AG04449 (cell line): ENCODE measurements at regions of chr12 and their contacts with region 1.

Region 1: DNA sequence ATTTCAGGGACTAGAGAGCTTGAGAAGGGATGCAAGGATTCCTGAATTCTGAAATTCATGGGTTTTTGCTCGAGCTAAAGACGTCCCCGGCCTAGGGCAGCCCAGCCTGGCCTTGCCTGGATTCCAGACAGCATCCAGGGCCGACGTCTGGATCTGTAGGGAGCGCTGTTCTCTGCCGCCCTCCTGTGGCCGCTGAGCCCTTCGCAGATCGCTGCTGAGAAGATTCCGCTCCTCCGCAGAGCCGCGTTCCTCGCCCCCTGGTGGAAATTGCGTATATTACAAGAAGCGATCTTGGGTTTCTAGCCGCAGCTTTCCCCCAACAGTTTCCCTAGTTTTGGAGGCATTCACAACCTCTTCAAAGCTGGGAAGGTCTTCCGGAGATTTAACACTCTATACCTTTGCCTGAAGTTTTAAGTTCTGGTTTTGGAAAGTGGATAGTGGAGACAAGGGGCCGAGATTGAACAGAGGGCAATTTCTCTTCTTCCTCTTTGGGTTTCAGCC is 5.1 kb downstream of the CISTR start:
- DNase-seq: no peak
- H3K4me3 ChIP-seq: no peak overlapping the region
- CTCF ChIP-seq: peak; percentile 100

Region 2: GRCh38 chr12:53675651-53676453 is 70.8 kb before region 1 on chr12 and contains the start of gene ATP5MC2:
- CTCF ChIA-PET with region 1: interaction called, 74 read pairs
- POLR2A ChIA-PET with region 1: no interaction called
- DNase-seq: peak; percentile 88
- H3K4me3 ChIP-seq: peak within 1 kb of the TSS; percentile 90
- CTCF ChIP-seq: peak; percentile 100

Region 3: DNA sequence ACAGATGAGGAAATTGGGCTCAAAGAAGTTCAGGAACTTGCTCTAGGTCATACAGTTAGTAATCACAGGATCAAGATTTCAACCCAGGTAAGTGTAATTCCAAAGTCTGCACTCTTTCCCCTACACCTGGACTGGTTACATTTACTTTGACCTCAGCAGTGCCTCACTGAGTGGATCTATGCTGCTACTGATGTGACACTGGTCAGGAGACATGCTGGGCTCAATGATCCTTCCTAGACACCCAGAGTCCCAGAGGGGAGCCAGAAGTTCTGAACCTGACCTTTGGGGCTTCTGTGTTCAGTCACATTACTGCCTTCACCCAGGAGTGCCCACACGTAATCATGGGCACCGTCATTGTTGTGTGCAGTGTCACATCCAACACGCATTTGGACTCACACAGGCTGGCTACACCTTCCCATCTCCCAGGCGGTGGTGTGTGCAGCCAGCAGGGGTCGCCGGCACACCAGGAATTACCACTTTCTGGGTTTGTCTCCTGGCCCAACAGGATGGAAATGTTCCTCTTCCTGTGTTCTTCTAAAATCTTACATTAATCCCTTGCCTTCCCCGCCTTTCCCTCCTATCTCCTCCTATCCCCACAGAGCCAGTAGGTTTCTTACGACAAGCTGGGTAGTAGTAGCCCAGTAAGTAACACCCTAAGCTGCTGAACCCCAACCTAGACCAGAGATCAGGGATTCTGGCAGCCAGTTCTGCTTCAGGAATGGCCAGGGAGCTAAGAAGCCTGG is 45.0 kb before region 1 on chr12:
- CTCF ChIA-PET with region 1: interaction called, 941 read pairs
- POLR2A ChIA-PET with region 1: interaction called, 3 read pairs
- DNase-seq: no peak
- H3K4me3 ChIP-seq: no peak overlapping the region
- CTCF ChIP-seq: peak; percentile 96

Region 4: GRCh38 chr12:53727310-53728041 is 19.2 kb before region 1 on chr12 and contains the start of gene CALCOCO1:
- CTCF ChIA-PET with region 1: interaction called, 668 read pairs
- POLR2A ChIA-PET with region 1: no interaction called
- DNase-seq: peak; percentile 80
- H3K4me3 ChIP-seq: peak within 1 kb of the TSS; percentile 95
- CTCF ChIP-seq: no peak

Region 5: GRCh38 chr12:53757095-53757770 is 10.6 kb after region 1 on chr12:
- CTCF ChIA-PET with region 1: interaction called, 87 read pairs
- POLR2A ChIA-PET with region 1: no interaction called
- DNase-seq: no peak
- H3K4me3 ChIP-seq: no peak overlapping the region
- CTCF ChIP-seq: peak; percentile 85

Region 6: GRCh38 chr12:53965281-53966084 is 218.8 kb after region 1 on chr12:
- CTCF ChIA-PET with region 1: interaction called, 13 read pairs
- POLR2A ChIA-PET with region 1: no interaction called
- DNase-seq: no peak
- H3K4me3 ChIP-seq: peak overlapping the region; percentile 73
- CTCF ChIP-seq: no peak

Region 7: GRCh38 chr12:54207484-54208294 is 461.0 kb after region 1 on chr12:
- CTCF ChIA-PET with region 1: interaction called, 43 read pairs
- POLR2A ChIA-PET with region 1: no interaction called
- DNase-seq: no peak
- H3K4me3 ChIP-seq: no peak overlapping the region
- CTCF ChIP-seq: peak; percentile 99